ENCODE measurements at regions of chr19 and their contacts with region 1.

Region 1: GRCh38 chr19:48588670-48589399 is 17.7 kb upstream of the SPACA4 start:
- DNase-seq: peak; percentile 91
- H3K4me3 Mint-ChIP-seq: peak overlapping the region; percentile 77
- H3K27ac Mint-ChIP-seq: peak overlapping the region; percentile 85
- H3K4me1 Mint-ChIP-seq: peaks cover 48% of the 10 kb centered on the region
- H3K27me3 Mint-ChIP-seq: no peaks in the 10 kb centered on the region

Region 2: DNA sequence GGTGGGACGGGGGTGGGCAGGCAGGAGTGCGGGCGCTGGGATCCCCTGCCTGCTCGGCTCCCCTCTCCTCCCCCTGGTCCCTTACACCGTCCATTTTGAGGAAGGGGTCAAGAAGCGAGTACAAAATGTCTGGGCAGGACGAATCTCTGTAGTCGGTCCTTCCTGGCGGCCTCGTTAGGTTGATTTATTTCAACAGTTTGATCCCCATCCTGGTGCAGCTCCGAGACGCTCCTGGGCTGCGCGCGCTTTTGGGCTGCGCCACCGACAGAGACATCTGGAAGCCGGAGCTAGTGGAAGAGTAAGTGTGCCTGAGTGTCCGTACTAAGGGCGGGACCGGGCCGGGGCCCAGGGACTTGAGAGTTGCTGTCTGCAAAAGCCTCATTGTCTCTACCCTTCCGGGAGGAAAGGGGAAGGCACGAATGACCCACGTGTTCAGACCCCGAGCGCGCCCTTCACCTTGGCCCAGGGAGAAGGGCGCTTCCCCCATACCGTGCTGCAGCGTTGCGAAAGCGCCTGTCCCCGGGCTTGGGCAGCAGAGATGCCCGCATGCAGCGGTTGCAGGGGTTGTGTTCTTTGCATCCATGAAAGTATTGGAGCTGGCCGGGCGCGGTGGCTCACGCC is 317.2 kb before region 1 on chr19:
- CTCF ChIA-PET with region 1: interaction called, 12 read pairs
- POLR2A ChIA-PET with region 1: no interaction called
- DNase-seq: peak; percentile 24
- H3K4me3 Mint-ChIP-seq: peak overlapping the region; percentile 85
- H3K27ac Mint-ChIP-seq: peak overlapping the region; percentile 12
- H3K4me1 Mint-ChIP-seq: peaks cover 20% of the 10 kb centered on the region
- H3K27me3 Mint-ChIP-seq: peaks cover 13% of the 10 kb centered on the region

Region 3: DNA sequence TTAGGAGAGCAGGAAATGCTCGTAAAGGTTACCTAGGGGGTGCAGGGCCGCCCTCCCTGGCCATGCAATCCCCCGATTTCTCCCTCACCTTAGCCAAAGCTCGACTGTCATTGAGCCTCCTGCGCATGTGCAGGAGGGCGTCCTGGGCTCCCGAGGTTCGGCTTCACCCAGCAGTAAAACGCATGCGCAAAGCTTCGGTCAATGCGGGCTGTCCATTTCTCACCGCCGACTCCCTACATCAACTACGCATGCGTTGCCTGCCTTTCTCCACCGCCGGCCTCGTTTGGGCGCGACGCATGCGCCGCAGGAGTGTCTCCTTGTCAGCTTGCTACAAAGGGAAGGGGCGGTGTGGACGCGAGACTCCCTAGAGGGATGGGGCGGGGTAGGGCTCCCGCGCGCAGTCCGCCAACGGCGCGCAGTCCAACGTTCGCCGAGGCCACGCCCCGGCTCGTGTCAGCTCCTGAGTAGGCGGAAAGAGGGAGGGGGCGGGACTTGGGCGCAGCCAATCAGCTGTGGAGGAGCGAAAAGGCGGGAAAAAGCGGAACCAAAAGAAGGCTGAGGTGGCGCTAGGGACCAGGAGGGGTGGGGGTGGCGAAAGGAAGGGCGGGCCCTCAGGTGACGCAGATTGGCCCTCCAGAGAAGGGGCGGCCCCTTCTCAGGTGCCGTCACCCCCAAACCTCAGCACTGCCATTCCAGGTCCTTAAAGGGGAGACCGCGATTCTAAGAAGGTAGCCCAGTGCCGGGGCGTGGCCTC is 224.8 kb before region 1 on chr19 and contains the starts of genes SYNGR4 and TMEM143:
- CTCF ChIA-PET with region 1: interaction called, 11 read pairs
- POLR2A ChIA-PET with region 1: no interaction called
- DNase-seq: peak; percentile 99
- H3K4me3 Mint-ChIP-seq: peak within 1 kb of the TSS; percentile 82
- H3K27ac Mint-ChIP-seq: peak within 1 kb of the TSS; percentile 95
- H3K4me1 Mint-ChIP-seq: peaks cover 22% of the 10 kb centered on the region
- H3K27me3 Mint-ChIP-seq: no peaks in the 10 kb centered on the region
- total RNA-seq, gene SYNGR4: 0.28 TPM in 1 of 2 experiments, not detected in the other
- total RNA-seq, gene TMEM143: 17.4 to 18.2 TPM

Region 4: GRCh38 chr19:48492925-48493717 is 95.7 kb before region 1 on chr19:
- CTCF ChIA-PET with region 1: interaction called, 59 read pairs
- POLR2A ChIA-PET with region 1: interaction called, 10 read pairs
- DNase-seq: peak; percentile 88
- H3K4me3 Mint-ChIP-seq: peak overlapping the region; percentile 51
- H3K27ac Mint-ChIP-seq: peak overlapping the region; percentile 35
- H3K4me1 Mint-ChIP-seq: peaks cover 46% of the 10 kb centered on the region
- H3K27me3 Mint-ChIP-seq: peaks cover 56% of the 10 kb centered on the region

Region 5: GRCh38 chr19:48501496-48502350 is 87.1 kb before region 1 on chr19:
- CTCF ChIA-PET with region 1: interaction called, 197 read pairs
- POLR2A ChIA-PET with region 1: interaction called, 3 read pairs
- DNase-seq: peak; percentile 73
- H3K4me3 Mint-ChIP-seq: peak overlapping the region; percentile 57
- H3K27ac Mint-ChIP-seq: no peak overlapping the region
- H3K4me1 Mint-ChIP-seq: peaks cover 21% of the 10 kb centered on the region
- H3K27me3 Mint-ChIP-seq: peaks cover 17% of the 10 kb centered on the region

Region 6: DNA sequence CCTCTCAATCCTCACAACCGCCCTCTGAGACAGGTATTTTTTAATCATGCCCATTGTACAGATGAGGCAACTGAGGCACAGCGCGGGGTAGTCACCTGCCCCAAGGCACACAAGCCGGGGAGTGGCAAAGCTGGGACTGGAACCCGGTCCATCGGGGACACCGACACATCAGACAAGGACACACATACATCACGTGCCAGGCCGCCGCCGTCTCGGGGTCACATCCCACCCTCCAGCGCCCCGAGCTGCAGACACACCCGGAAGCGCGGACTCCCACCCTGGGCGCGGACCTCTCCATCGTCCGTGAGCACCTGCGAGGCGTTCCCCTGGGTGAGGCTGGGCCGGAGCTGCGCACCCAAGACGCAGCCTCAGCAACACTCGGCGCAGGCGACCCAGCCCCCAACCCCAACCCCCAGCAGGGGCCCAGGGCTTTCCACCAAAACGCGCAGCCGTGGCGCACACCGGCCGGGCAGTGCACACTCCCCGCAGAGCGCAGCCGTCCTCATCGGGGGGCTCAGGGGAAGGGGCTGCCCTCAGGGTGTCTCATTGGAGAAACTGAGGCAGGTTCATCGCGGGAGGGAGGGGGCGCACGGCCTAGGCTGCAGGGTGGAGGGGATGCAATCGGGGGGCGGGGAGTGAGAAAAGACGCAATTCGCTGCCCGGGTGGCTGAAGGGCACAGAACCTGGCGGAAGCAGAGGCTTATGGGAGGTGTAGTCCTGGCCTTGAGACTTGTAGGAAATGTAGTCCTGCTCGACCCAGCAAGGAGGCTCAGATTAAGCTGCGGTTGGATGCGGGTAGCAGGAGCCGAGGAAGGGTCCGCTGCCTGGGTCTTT is 75.3 kb before region 1 on chr19:
- CTCF ChIA-PET with region 1: interaction called, 197 read pairs
- POLR2A ChIA-PET with region 1: interaction called, 4 read pairs
- DNase-seq: peak; percentile 78
- H3K4me3 Mint-ChIP-seq: no peak overlapping the region
- H3K27ac Mint-ChIP-seq: peak overlapping the region; percentile 53
- H3K4me1 Mint-ChIP-seq: peaks cover 19% of the 10 kb centered on the region
- H3K27me3 Mint-ChIP-seq: no peaks in the 10 kb centered on the region

Region 7: GRCh38 chr19:48608798-48609263 is 20.0 kb after region 1 on chr19:
- CTCF ChIA-PET with region 1: interaction called, 10 read pairs
- POLR2A ChIA-PET with region 1: interaction called, 5 read pairs
- DNase-seq: peak; percentile 73
- H3K4me3 Mint-ChIP-seq: no peak overlapping the region
- H3K27ac Mint-ChIP-seq: peak overlapping the region; percentile 19
- H3K4me1 Mint-ChIP-seq: peaks cover 4% of the 10 kb centered on the region
- H3K27me3 Mint-ChIP-seq: no peaks in the 10 kb centered on the region